Left cardiac atrium (tissue), 4 donors: ENCODE measurements at regions of chr13 and their contacts with region 1.

Region 1: DNA sequence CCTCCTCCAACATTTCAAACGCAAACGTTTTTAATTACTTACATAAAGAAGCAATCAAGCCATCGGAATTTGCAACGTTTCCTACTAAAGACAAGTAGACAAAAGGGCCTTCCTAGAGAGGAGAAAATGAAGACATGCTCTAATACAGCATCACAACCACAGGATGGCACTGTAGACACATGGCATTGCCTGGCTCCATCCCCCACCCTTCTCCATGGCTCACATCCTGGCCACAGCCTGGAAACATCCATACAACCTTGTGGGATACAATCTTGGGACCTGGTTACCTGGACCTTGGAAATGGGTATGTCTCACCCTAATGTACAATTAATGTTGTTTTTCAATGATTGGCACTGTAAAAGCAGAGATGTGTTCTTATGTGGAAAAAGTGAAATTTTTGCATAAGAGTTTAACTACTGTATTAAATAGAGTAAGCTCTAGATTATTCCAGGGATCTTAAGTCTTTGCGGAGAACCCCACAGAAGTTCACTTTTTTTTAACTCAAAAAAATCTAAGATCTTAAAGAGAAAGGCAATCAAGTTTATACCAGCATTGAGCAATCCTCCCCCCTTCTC is 21.5 kb downstream of the EBPL start:
- DNase-seq: peak; percentile 41
- ATAC-seq: peak; percentile 88 to 95

Region 2: GRCh38 chr13:50006426-50007135 is 336.8 kb after region 1 on chr13:
- intact Hi-C with region 1: no loop called
- DNase-seq: no peak
- ATAC-seq: no peak

Region 3: GRCh38 chr13:51070005-51070649 is 1400.3 kb after region 1 on chr13:
- intact Hi-C with region 1: loop called in 1 of 2 experiments (anchors 10 kb)
- DNase-seq: peak; percentile 81
- ATAC-seq: peak; percentile 85 to 90